BJ (cell line): ENCODE measurements at regions of chr4 and their contacts with region 1.

Region 1: DNA sequence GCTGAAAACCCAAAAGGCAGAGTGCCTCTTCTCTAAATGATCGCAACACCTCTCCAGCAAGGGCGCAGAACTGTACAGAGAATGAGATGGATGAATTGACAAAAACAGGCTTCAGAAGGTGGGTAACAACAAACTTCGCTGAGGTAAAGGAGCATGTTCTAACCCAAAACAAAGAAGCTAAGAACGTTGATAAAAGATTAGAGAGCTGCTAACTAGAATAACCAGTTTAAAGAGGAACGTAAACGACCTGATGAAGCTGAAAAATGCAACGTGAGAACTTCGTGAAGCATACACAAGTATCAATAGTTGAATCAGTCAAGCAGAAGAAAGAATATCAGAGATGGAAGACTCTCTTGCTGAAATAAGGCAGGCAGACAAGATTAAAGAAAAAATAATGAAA is 42.8 kb downstream of the HERC3 start:
- DNase-seq: no peak
- H3K4me3 ChIP-seq: no peak overlapping the region
- H3K27me3 ChIP-seq: no peaks in the 10 kb centered on the region
- CTCF ChIP-seq: no peak

Region 2: DNA sequence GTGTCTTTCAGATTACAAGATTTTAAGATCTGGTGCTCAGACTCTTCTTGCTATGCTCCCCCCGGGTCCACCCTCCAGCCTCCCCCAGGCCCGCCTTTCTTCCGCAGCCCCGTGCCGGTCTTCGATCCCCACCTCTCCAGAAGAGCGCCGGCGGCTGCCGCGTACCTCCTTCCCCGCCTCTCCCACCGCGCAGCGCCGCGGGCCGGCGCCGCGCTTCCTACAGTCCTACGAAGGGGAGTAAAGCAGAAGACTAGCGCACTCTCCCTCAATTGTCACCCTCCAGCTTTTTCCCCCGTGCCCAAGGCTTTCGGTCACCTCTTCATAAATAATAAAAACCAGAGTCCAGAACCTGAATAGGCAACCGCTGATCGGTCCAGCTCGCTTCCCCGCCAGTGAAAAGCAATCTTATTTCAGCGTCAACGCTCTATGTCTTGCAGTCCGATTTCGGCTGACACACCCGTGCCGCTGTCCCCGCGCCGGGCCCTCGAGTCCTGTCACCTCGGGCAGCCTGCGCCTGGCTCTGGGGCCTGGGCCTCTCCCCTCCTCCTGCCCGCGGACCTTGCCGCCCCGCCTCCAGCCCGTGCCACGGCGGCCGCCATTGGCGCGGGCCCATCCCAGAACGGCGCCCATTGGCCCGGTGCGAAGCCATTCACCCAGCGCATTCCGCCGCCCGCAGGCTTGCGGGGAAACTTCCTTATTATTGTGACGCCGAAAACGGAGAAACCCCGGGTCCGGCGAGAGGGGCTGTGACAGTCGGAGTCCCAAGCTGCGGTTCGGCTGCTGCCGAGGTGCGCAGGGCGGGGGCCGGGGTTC is 43.1 kb before region 1 on chr4 and contains the start of gene HERC3:
- CTCF ChIA-PET with region 1: no interaction called
- POLR2A ChIA-PET with region 1: interaction called, 13 read pairs
- DNase-seq: no peak
- H3K4me3 ChIP-seq: peak within 1 kb of the TSS; percentile 86
- H3K27me3 ChIP-seq: no peaks in the 10 kb centered on the region
- CTCF ChIP-seq: 0 out of 2 replicates have a peak, but pooled peaks have one; percentile 11
- polyA plus RNA-seq, gene HERC3: 13.0 and 13.2 TPM in 2 replicates